HEK293 (cell line): ENCODE measurements at regions of chr5 and their contacts with region 1.

Region 1: GRCh38 chr5:149114403-149115312 is 26.6 kb upstream of the ABLIM3 start:
- H3K4me3 ChIP-seq: no peak overlapping the region
- H3K27ac ChIP-seq: no peak overlapping the region
- H3K4me1 ChIP-seq: peaks cover 5% of the 10 kb centered on the region
- CTCF ChIP-seq: peak; percentile 74; the same call in 1 of the 2 replicates

Region 2: DNA sequence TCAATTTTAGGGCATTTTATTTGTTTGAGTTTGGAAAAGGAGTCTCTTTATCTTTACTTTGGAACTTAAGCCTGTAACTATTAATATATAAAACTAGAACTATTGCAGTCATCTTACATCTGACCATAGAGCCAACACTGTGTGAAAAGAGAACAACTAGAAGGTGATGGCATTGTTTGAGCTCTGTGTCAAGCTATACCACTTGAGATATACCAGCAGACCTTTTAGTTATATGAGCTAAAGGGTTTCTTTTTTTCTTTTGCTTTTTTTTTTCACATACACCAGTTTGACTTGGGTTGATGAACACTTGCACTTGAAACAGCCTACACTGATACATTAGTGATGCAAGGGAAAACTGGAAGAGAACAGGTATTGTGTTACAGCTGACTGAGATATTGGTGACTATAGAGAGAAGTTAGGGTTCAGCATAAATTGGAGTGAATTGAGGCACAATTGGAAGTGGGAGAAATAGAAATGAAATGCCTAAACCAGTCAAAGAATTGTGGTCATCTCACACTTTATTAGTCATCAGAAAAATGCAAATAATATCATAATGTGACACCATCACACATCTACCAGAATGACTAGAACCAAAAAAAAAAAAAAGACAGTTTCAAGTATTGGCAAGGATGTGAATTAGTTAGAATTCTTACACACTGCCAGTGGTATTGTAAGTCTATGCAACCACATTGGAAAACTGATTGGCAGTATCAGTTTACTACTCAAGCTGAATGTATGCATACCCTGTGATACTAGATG is 227.4 kb before region 1 on chr5:
- CTCF ChIA-PET with region 1: no interaction called
- POLR2A ChIA-PET with region 1: no interaction called
- H3K4me3 ChIP-seq: no peak overlapping the region
- H3K27ac ChIP-seq: no peak overlapping the region
- H3K4me1 ChIP-seq: no peaks in the 10 kb centered on the region
- CTCF ChIP-seq: no peak

Region 3: DNA sequence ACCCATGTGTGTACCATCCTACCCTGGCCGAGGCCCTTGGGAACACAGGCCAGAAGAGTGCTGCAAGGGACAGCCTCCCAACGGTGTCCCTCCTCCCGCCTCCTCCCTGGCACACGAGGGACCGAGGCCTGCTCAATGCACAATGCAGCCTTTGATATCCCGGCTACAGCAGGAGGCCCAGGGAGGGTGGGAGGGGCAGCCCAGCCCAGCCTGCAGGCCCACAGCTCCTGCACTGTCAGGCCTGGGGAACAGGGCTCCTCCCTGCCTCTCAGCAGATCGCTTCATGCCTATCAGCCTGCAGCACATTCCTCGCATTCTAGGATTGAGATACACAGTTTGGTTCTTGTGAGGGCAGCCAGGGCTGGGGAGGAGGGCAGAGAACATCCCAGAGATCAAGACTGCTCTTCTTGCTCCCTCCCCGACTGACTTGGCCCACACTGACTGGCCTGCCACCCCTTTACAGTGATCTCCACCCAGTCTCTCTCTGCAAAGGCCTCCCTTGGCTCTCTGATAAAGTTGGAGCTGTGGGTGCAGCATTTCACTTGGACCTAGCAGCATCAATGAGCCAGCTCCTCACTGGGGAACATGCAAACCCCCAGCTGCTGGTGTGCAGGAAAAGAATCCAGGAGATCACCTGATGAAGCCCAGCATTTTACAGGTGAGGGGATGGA is 51.5 kb before region 1 on chr5 and contains the start of gene SH3TC2:
- CTCF ChIA-PET with region 1: interaction called, 10 read pairs
- POLR2A ChIA-PET with region 1: no interaction called
- H3K4me3 ChIP-seq: no peak within 1 kb of the TSS
- H3K27ac ChIP-seq: no peak within 1 kb of the TSS
- H3K4me1 ChIP-seq: no peaks in the 10 kb centered on the region
- CTCF ChIP-seq: no peak

Region 4: DNA sequence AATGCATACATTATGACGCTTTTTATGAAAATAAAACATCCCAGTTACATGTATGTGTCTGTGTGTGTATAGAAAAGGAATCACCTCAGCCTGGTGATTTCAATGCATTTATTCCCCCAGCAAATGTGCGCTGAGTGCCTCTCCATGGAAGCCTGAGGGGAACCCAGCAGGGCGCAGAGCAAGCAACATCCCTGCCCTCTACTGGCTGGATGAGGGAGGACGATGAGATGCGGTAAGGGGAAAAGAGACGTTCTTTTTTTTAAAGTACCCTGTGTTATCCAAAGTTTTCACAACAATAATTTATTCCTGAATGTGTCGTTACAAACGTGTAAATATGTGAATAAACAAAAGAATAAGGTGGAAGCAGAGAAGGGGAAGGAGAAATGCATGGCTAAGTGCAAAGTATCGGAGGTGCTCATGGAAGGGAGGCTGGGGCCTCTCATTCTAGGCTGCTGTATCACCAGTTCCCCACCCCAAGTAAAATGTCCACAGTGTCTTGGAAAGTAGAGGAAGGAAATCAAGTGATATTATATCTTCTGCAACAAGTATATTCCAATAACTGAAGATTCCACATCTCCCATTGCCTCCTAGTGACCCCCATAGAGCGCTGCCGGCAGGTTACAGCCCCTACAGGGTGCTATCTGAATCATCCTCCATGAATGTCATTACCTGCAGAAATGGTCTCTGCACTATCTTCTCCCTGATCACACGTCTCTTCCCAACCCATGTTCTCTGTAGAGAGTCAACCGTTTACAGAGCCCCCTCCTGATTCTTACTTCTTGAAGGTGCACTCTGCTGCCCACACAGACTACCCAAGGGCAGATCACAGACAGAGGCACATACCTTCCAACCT is 13.6 kb after region 1 on chr5:
- CTCF ChIA-PET with region 1: interaction called, 23 read pairs
- POLR2A ChIA-PET with region 1: no interaction called
- H3K4me3 ChIP-seq: no peak overlapping the region
- H3K27ac ChIP-seq: no peak overlapping the region
- H3K4me1 ChIP-seq: no peaks in the 10 kb centered on the region
- CTCF ChIP-seq: peak; percentile 36; the same call in 1 of the 2 replicates

Region 5: DNA sequence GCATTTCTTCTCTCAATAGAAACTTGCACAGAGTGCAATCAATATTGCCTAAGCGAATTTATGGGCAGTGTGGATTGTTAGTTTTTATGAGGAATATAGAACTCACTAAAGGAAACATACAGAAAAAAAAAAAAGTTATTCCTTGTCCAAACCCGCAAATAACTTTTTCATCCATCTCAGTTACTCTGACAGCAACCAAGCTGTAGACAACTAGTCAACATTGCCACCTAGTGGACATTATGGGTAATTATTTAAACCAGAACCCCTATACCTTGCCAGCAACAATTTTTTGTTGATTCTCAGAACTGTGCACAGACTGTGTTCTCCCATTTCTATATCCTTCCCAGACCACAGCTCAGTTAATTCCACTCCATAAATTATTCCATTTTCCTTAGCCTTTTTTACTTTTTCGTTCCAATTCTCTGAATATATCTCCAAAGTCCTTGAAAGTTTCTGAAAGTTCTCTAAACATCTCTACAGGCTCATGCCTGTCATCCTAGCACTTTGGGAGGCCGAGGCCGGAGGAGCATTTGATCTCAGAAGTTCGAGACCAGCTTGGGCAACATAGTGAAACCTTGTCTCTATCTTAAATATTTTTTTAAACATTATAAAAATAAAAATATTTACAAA is 154.4 kb after region 1 on chr5:
- CTCF ChIA-PET with region 1: interaction called, 12 read pairs
- POLR2A ChIA-PET with region 1: no interaction called
- H3K4me3 ChIP-seq: no peak overlapping the region
- H3K27ac ChIP-seq: no peak overlapping the region
- H3K4me1 ChIP-seq: peaks cover 3% of the 10 kb centered on the region; the same call in 1 of the 2 replicates
- CTCF ChIP-seq: peak; percentile 28